A549 (cell line): ENCODE measurements at regions of chr4 and their contacts with region 1.

Region 1: GRCh38 chr4:99462875-99463464 is 27.8 kb upstream of the ADH7 start:
- DNase-seq: peak; percentile 53 to 60
- ATAC-seq: peak; percentile 91 to 96
- H3K4me3 ChIP-seq: no peak overlapping the region
- H3K27ac ChIP-seq: no peak overlapping the region
- H3K4me1 ChIP-seq: no peaks in the 10 kb centered on the region
- CTCF ChIP-seq: peak; percentile 70
- EP300 ChIP-seq: no peak
- POLR2A ChIP-seq: no peak
- RAD21 ChIP-seq: peak; percentile 83 to 90

Region 2: GRCh38 chr4:99117876-99118693 is 344.9 kb before region 1 on chr4:
- CTCF ChIA-PET with region 1: interaction called, 10 read pairs
- POLR2A ChIA-PET with region 1: no interaction called
- DNase-seq: peak in 1 of 2 experiments; percentile 3
- ATAC-seq: no peak
- H3K4me3 ChIP-seq: no peak overlapping the region
- H3K27ac ChIP-seq: no peak overlapping the region
- H3K4me1 ChIP-seq: no peaks in the 10 kb centered on the region
- CTCF ChIP-seq: peak; percentile 41; the same call in 2 of the 3 replicates
- EP300 ChIP-seq: no peak
- POLR2A ChIP-seq: no peak
- RAD21 ChIP-seq: peak; percentile 21 to 41; a peak in 2 of 5 replicates

Region 3: DNA sequence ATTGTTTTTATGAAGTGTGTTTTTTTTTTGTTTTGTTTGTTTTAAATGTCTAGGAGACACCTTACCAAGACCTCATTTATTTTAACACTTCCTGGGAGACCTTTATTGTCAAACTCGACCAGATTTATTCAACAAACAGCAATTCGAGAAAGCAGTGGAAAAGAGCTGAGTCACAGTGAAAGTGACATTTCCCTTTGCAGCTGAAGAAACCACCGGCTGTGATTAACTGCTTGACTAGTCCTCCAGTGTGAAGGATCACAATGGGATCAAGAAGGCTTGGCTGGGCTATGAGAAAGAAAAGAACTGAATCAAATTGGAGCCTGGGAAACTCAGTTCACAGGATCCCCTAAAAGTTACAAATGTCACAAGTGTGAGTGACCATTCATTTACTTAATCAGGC is 15.9 kb before region 1 on chr4:
- CTCF ChIA-PET with region 1: interaction called, 11 read pairs
- POLR2A ChIA-PET with region 1: no interaction called
- DNase-seq: peak in 1 of 2 experiments; percentile 72
- ATAC-seq: peak; percentile 39 to 63; a peak in 3 of 6 replicates
- H3K4me3 ChIP-seq: no peak overlapping the region
- H3K27ac ChIP-seq: peak overlapping the region; percentile 67 to 73
- H3K4me1 ChIP-seq: peaks cover 10% of the 10 kb centered on the region; the same call in 1 of the 3 replicates
- CTCF ChIP-seq: no peak
- EP300 ChIP-seq: no peak
- POLR2A ChIP-seq: no peak
- RAD21 ChIP-seq: no peak